HEK293T (cell line): ENCODE measurements at regions of chr6 and their contacts with region 1.

Region 1: GRCh38 chr6:4775584-4776494 is at the start of gene CDYL:
- DNase-seq: peak; percentile 94

Region 2: DNA sequence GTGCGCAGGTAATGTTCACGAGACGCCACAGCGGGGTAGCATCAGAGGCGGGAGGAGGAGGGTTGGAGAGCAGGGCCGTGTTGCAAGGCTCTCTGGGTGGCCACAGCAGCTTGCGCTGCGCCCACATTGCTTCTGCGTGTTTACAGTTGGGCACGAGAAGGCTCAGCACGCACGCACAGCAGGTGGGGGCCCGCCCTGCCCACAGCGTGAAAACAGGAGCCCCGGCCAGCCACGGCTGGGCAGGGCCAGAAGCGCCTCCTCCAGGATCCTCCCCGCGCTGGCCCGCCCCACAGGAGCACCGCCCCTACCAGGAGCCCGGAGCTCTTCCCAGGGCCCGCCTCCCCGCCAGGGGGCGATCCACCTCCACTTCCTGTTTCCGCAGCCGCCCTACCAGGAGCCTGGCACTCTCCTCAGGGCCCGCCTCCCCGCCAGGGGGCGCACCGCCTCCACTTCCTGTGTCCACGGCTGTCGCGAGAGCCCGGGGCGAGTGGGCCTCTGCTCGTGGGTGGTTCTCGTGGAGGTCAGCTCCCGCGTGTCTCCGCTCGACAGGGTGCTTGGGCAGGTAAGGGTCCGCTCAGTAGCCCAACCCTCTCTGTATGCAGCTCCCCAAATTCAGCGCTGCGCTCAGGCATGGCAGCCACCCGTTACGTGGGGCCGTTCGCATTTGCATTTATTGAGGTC is 926.8 kb before region 1 on chr6 and contains the start of gene FAM50B:
- CTCF ChIA-PET with region 1: no interaction called
- POLR2A ChIA-PET with region 1: no interaction called
- DNase-seq: peak; percentile 96

Region 3: DNA sequence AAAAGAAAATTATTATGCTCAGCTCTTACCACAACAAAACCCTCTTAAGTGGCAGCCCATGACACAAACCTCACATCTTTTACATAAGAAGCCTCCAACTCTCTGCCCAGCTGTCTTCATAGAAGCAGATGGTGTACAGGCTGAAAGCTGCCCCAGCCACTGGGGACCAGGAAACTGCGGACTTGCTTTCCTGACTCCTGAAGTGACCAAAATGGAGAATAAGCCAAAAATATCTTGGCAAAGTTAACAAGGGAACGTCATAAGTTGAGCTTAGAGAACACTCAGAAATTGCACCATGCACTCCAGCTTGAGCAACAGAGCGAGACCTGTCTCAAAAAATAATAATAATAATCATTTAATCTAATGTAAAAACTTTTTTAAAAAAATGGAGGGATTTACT is 159.9 kb before region 1 on chr6:
- CTCF ChIA-PET with region 1: no interaction called
- POLR2A ChIA-PET with region 1: no interaction called
- DNase-seq: no peak

Region 4: DNA sequence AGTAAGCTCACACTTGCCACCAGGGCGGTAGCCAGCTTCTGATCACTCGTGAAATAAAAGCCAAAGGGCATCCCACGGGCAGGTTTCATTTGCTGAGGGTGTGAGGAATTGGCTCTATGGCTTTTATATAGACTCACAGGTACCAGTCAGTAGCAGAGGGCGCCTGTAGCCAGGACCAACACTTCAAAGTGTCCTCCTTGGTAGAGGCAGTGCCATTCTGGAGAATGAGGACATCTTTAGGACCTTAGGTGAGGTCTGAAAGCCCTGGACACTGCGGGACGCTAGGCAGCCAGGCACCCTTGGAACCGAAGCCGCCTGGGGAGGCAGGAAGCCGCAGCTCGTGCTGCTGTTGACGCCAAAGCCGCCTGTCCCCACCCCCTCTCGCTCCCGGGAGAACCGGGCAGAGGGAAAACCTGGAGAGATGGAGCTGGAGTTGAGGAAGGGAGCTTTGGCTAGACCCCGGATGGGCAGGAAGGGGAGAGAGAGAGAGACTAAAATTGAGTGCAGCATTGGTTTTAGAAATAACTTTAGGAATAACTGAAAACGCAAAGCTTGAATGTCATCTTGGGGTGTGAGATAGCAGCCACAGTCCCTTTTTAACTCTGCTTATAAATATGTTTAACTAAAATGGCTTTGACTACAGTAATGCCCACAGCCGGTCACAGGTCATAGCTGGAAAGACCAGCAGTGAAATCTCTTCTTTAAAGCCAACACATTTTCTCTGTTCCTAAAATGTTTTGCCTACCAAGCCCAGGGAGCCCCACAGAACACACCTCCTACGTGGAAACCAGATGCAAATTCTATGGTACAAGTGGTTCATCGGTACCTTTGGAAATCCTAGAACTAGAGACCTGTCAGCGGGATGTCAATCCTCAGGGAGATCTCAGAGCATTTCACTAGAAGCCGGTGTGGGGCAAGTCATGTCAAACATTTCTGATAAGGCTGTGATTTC is 128.1 kb before region 1 on chr6:
- CTCF ChIA-PET with region 1: no interaction called
- POLR2A ChIA-PET with region 1: interaction called, 15 read pairs
- DNase-seq: peak; percentile 82

Region 5: GRCh38 chr6:4829089-4829488 is 53.2 kb after region 1 on chr6:
- CTCF ChIA-PET with region 1: no interaction called
- POLR2A ChIA-PET with region 1: no interaction called
- DNase-seq: no peak